ENCODE measurements at regions of chr1 and their contacts with region 1.

Region 1: GRCh38 chr1:109548321-109549267 is at the start of gene GNAI3:
- DNase-seq: peak; percentile 98
- H3K4me3 Mint-ChIP-seq: peak within 1 kb of the TSS; percentile 91
- H3K27ac Mint-ChIP-seq: peak within 1 kb of the TSS; percentile 88
- H3K4me1 Mint-ChIP-seq: peaks cover 41% of the 10 kb centered on the region
- H3K27me3 Mint-ChIP-seq: no peaks in the 10 kb centered on the region
- total RNA-seq, gene GNAI3: 8.0 to 8.5 TPM

Region 2: GRCh38 chr1:109483672-109484518 is 64.7 kb before region 1 on chr1 and contains the start of gene ATXN7L2:
- CTCF ChIA-PET with region 1: interaction called, 3 read pairs
- intact Hi-C with region 1: loop called (anchors 1 kb)
- DNase-seq: peak; percentile 93
- H3K4me3 Mint-ChIP-seq: peak within 1 kb of the TSS; percentile 95
- H3K27ac Mint-ChIP-seq: peak within 1 kb of the TSS; percentile 85
- H3K4me1 Mint-ChIP-seq: peaks cover 24% of the 10 kb centered on the region
- H3K27me3 Mint-ChIP-seq: no peaks in the 10 kb centered on the region
- total RNA-seq, gene ATXN7L2: 15.2 to 16.4 TPM

Region 3: GRCh38 chr1:109559995-109560394 is 11.4 kb after region 1 on chr1:
- CTCF ChIA-PET with region 1: interaction called, 12 read pairs
- intact Hi-C with region 1: no loop called
- DNase-seq: no peak
- H3K4me3 Mint-ChIP-seq: no peak overlapping the region
- H3K27ac Mint-ChIP-seq: no peak overlapping the region
- H3K4me1 Mint-ChIP-seq: peaks cover 67% of the 10 kb centered on the region
- H3K27me3 Mint-ChIP-seq: no peaks in the 10 kb centered on the region

Region 4: GRCh38 chr1:109570417-109570827 is 21.8 kb after region 1 on chr1:
- CTCF ChIA-PET with region 1: no interaction called
- intact Hi-C with region 1: no loop called
- DNase-seq: no peak
- H3K4me3 Mint-ChIP-seq: no peak overlapping the region
- H3K27ac Mint-ChIP-seq: no peak overlapping the region
- H3K4me1 Mint-ChIP-seq: peaks cover 15% of the 10 kb centered on the region
- H3K27me3 Mint-ChIP-seq: no peaks in the 10 kb centered on the region

Region 5: GRCh38 chr1:109643385-109644230 is 95.0 kb after region 1 on chr1:
- CTCF ChIA-PET with region 1: interaction called, 115 read pairs
- intact Hi-C with region 1: loop called (anchors 1 kb)
- DNase-seq: peak; percentile 94
- H3K4me3 Mint-ChIP-seq: no peak overlapping the region
- H3K27ac Mint-ChIP-seq: no peak overlapping the region
- H3K4me1 Mint-ChIP-seq: peaks cover 5% of the 10 kb centered on the region
- H3K27me3 Mint-ChIP-seq: no peaks in the 10 kb centered on the region

Region 6: GRCh38 chr1:109773146-109773899 is 224.7 kb after region 1 on chr1:
- CTCF ChIA-PET with region 1: interaction called, 58 read pairs
- intact Hi-C with region 1: loop called (anchors 1 kb)
- DNase-seq: peak; percentile 85
- H3K4me3 Mint-ChIP-seq: no peak overlapping the region
- H3K27ac Mint-ChIP-seq: no peak overlapping the region
- H3K4me1 Mint-ChIP-seq: no peaks in the 10 kb centered on the region
- H3K27me3 Mint-ChIP-seq: no peaks in the 10 kb centered on the region

Region 7: DNA sequence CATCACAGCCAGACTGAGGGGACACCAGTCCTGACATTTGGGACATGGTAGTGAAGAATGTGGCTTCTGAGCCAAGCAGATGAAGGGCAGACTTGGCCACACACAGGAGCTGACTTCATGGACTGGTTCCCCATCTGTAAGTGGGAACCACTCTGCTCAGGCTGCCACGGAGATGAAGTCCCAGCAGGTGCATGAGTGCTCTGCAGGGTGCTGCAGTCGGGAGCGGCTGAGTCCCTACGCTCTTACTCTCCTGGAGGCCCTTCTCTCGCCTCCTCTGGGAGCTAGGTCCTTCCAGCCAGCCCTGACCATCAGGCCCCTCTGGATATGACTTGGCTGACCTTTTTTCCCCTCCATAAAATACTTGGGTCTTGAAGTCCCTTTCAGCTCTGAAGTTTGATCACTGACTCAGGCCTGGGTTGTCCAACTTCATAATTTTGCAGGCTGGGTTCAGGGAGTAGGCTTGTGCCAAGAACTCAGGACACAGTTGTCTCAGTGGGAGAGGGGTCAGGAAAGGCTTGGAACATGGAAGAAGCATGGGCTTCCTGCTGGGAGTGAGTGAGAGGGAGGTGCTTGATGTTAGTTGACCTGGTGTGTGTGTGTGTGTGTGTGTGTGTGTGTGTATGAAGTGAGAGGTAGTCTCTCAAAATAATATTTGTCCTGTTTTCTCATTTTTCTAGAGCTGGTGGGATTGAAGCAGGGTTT is 236.1 kb after region 1 on chr1:
- CTCF ChIA-PET with region 1: no interaction called
- intact Hi-C with region 1: no loop called
- DNase-seq: no peak
- H3K4me3 Mint-ChIP-seq: no peak overlapping the region
- H3K27ac Mint-ChIP-seq: no peak overlapping the region
- H3K4me1 Mint-ChIP-seq: peaks cover 21% of the 10 kb centered on the region
- H3K27me3 Mint-ChIP-seq: no peaks in the 10 kb centered on the region

Region 8: DNA sequence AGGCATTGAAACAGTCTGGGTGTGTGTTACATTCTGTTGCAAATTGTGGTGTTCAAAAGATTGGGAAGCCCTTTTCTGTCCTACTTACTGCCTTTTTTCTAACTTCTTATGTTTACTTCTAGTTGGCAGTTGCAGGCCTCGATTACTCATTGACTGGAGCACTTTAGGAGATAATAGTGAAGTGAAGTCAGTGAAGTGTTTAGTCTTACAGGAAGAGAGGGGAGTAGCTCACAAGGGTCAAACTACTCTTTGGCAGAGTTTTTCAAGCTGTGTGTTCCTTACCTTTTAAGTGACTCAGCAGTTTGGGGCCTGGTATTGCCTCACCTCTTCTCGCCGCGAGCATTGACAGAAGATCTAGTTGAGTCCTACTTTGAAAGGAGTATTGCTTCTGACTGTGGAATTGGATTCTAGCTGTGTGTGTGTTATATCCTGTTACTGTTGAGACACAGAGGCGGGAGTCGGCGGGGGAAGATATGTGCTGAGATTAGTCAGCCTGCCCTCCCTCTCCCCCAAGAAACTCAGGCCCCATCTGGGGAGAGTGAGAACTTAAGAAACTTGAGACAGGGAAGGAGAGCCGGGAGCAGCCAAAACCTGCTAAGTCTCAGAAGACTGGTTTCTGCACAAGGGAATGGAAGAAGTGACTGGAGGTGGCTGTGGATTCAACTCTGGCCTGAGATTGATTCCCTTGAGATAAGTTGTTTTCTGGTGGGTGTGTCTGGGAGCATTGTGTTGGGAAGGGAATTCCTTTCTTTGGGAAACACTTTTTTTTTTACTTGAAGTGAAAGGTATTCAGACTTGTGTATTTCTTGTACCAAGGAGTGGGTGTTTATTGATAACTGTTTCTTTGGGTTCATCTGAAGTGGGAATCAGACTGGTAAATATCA is 455.4 kb after region 1 on chr1:
- CTCF ChIA-PET with region 1: no interaction called
- intact Hi-C with region 1: loop called (anchors 5 kb)
- DNase-seq: peak; percentile 80
- H3K4me3 Mint-ChIP-seq: peak overlapping the region; percentile 23
- H3K27ac Mint-ChIP-seq: peak overlapping the region; percentile 83
- H3K4me1 Mint-ChIP-seq: peaks cover 21% of the 10 kb centered on the region
- H3K27me3 Mint-ChIP-seq: no peaks in the 10 kb centered on the region

Measured in activated naive CD4-positive, alpha-beta T cell treated with anti-CD3 and anti-CD28 coated beads for 36 hours (primary cell).